ENCODE measurements at regions of chr2 and their contacts with region 1.

Region 1: GRCh38 chr2:159712143-159712928 is at the start of gene MARCHF7:
- DNase-seq: peak; percentile 98
- ATAC-seq: peak; percentile 99
- total RNA-seq, gene MARCHF7: 70.7 TPM

Region 2: GRCh38 chr2:159615140-159615951 is 97.0 kb before region 1 on chr2:
- intact Hi-C with region 1: loop called (anchors 5 kb)
- DNase-seq: peak; percentile 93
- ATAC-seq: peak; percentile 93